Pancreas (tissue), 10 donors: ENCODE measurements at regions of chr20 and their contacts with region 1.

Region 1: DNA sequence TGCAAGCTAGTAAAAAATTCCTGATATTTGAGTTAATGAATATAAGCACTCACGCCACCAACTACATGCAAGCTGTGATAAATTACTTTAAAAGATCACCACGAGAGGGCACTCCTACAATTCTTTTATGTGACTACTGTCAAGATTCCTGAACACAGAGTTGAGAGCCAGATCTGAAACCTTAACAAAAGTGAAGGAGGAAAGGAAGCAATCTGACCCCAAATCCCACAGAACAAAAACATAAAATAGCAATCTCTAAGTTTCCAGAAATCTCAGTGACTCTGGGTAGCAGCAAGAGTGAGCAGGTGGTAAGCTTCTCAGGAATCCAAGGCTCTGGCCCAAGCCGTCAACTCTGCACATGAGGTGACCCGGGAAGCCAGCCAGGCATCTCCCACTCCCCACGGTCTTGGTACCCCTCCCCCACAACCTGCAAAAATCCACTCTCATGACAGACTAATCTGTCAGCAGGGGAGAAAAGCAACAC is 55.1 kb downstream of the STAU1 start:
- DNase-seq: peak in 2 of 6 donors; percentile 37 to 41
- ATAC-seq: peak; percentile 82 to 93 (median 90)
- H3K4me3 ChIP-seq: no peak overlapping the region
- H3K27ac ChIP-seq: no peak overlapping the region
- H3K4me1 ChIP-seq: peaks cover 5 to 12% (median 8%) of the 10 kb centered on the region in 3 donors
- H3K27me3 ChIP-seq: no peaks in the 10 kb centered on the region
- CTCF ChIP-seq: peak; percentile 10 to 44 (median 32)

Region 2: DNA sequence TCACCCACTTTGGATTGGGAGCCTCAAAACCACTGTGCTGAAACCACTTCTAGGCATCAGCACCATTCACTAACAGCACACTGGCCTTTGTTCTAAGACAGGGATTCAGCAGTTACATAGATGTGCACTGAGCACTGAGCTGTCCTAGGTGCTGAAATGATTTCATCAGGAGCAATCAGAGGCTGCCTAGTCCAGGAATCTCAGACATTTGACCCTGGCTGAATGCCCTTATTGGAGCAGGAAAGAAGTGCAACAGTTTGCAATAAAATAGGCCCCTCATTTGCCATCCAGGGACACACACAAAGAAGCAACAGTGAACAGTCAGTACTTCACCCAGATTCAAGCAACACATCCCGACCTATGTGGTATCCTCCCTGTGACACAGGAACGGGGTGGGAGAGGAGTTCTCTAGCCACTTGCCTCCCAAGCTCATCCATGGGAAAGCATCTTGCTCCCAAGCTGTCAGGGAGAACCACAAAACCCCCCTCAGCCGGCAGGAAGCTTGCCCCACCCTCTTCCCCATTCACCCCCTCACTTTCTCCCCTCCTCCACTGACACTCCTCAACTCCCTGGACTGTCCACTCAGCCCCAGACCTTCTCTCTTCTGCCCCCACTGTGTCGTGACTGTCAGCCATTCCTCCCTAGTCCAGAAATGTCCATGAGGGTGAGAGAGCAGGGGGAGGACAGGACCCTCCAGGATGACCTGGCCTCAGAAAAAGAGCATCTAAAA is 609.7 kb before region 1 on chr20:
- intact Hi-C with region 1: no loop called
- DNase-seq: no peak
- ATAC-seq: peak in 2 of 4 donors; percentile 58 to 83
- H3K4me3 ChIP-seq: no peak overlapping the region
- H3K27ac ChIP-seq: no peak overlapping the region
- H3K4me1 ChIP-seq: no peaks in the 10 kb centered on the region
- H3K27me3 ChIP-seq: peaks cover 0 to 3% (median 0%) of the 10 kb centered on the region in 4 donors
- CTCF ChIP-seq: no peak

Region 3: GRCh38 chr20:49219089-49219923 is 86.3 kb after region 1 on chr20 and contains the start of gene DDX27:
- intact Hi-C with region 1: loop called in 2 of 3 experiments (anchors 5 kb)
- DNase-seq: peak; percentile 94 to 98 (median 96)
- ATAC-seq: peak; percentile 94 to 98 (median 96)
- H3K4me3 ChIP-seq: peak within 1 kb of the TSS; percentile 72 to 89 (median 79)
- H3K27ac ChIP-seq: peak within 1 kb of the TSS; percentile 35 to 80 (median 69)
- H3K4me1 ChIP-seq: peaks cover 0 to 15% (median 7%) of the 10 kb centered on the region in 3 donors
- H3K27me3 ChIP-seq: no peaks in the 10 kb centered on the region
- CTCF ChIP-seq: no peak
- total RNA-seq, gene DDX27: 12.0 to 18.4 (median 15.9) TPM